Heart left ventricle (tissue), 16 donors: ENCODE measurements at regions of chr5 and their contacts with region 1.

Region 1: GRCh38 chr5:54217826-54218503 is 92.4 kb downstream of the ARL15 start:
- DNase-seq: peak in 2 of 5 donors; percentile 32 to 40
- ATAC-seq: peak; percentile 71 to 89 (median 81)
- H3K4me3 ChIP-seq: no peak overlapping the region
- H3K27ac ChIP-seq: no peak overlapping the region
- H3K4me1 ChIP-seq: peaks cover 0 to 20% (median 5%) of the 10 kb centered on the region in 12 donors
- H3K27me3 ChIP-seq: no peaks in the 10 kb centered on the region
- CTCF ChIP-seq: peak; percentile 75 to 91 (median 86)
- POLR2A ChIP-seq: no peak

Region 2: DNA sequence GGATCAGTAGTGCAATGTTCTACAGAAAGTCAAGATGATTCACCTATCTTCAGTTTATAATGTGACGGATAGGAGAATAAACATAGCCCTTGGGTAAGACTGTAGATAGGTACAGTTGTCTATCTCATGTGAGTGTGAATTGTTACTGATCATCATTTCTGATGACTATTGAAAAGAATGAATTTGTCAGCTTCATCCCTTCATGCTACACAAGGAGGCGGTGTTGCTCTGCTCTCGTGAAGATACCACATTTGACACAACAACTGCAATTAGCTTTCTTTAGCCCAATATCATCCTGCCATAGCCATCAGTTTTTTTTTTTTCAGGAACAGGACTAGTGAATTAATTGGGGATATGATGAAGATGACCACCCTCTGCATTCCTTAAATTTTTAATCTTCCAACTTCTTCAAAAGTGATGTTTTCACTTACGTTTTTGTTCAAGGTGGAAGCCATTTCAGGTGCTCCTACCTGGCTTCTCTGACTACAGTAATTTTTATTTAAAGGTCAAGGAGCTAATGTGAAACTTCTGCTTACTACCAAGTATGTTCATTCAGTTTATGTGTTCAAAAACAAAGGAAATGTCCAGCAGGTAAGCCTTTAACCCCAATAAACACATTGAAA is 955.5 kb before region 1 on chr5:
- intact Hi-C with region 1: loop called in 2 of 10 experiments (anchors 10 kb)
- DNase-seq: no peak
- ATAC-seq: no peak
- H3K4me3 ChIP-seq: no peak overlapping the region
- H3K27ac ChIP-seq: no peak overlapping the region
- H3K4me1 ChIP-seq: peaks cover 0 to under 1% (median 0%) of the 10 kb centered on the region in 12 donors
- H3K27me3 ChIP-seq: no peaks in the 10 kb centered on the region
- CTCF ChIP-seq: peak in 7 of 12 donors; percentile 18 to 54 (median 47)
- POLR2A ChIP-seq: no peak

Region 3: GRCh38 chr5:53874409-53874808 is 343.6 kb before region 1 on chr5:
- intact Hi-C with region 1: loop called in 3 of 10 experiments (anchors 10 kb)
- DNase-seq: no peak
- ATAC-seq: no peak
- H3K4me3 ChIP-seq: no peak overlapping the region
- H3K27ac ChIP-seq: no peak overlapping the region
- H3K4me1 ChIP-seq: no peaks in the 10 kb centered on the region
- H3K27me3 ChIP-seq: no peaks in the 10 kb centered on the region
- CTCF ChIP-seq: peak in 1 of 12 donors; percentile 5
- POLR2A ChIP-seq: no peak

Region 4: DNA sequence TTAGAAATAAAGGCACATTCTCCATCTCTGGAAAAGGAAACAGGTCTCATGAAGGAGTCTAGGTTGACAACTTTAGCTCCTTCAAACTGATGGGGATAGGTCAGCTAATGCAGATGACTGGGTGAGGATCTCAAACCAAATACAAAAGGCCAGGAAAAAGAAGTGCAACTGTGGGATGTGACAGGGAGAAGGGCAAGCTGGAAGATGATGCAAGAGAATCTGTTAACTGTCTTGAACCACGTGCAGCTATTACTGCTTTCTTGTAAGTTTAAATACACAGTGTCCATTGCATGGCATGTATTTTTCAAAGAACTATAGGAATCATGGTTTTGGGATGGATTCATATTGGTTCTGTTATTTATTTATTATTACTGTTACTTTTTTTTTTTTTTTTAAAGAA is 325.7 kb before region 1 on chr5:
- intact Hi-C with region 1: loop called in 1 of 10 experiments (anchors 10 kb)
- DNase-seq: no peak
- ATAC-seq: no peak
- H3K4me3 ChIP-seq: no peak overlapping the region
- H3K27ac ChIP-seq: peak overlapping the region in 2 of 12 donors; percentile 26 to 61
- H3K4me1 ChIP-seq: peaks cover 0 to 10% (median 0%) of the 10 kb centered on the region in 12 donors
- H3K27me3 ChIP-seq: no peaks in the 10 kb centered on the region
- CTCF ChIP-seq: no peak
- POLR2A ChIP-seq: no peak

Region 5: DNA sequence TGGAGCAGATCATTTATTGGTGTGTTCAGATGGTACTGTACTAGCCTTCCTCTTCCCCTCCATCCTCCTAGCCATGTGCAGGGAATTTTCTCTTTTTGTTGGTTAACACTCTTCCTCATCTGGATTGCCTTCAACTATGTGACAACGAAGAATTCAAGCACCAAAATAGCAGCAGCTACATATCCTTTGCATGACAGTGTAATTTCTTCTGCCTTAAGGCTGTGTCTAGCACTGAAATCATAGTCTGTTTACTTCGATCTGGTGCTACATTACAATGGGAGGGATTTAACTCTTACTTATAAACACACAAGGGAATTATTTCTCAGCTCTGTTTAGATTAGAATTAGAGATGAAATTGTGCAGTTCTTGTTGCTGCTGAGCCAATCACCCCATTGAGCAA is 168.0 kb before region 1 on chr5:
- intact Hi-C with region 1: loop called in 1 of 10 experiments (anchors 10 kb)
- DNase-seq: no peak
- ATAC-seq: peak; percentile 60 to 82 (median 73)
- H3K4me3 ChIP-seq: peak overlapping the region in 1 of 12 donors; percentile 8
- H3K27ac ChIP-seq: peak overlapping the region in 9 of 12 donors; percentile 16 to 73 (median 56)
- H3K4me1 ChIP-seq: peaks cover 0 to 26% (median 1%) of the 10 kb centered on the region in 12 donors
- H3K27me3 ChIP-seq: no peaks in the 10 kb centered on the region
- CTCF ChIP-seq: no peak
- POLR2A ChIP-seq: no peak

Region 6: GRCh38 chr5:54090495-54091084 is 127.4 kb before region 1 on chr5:
- intact Hi-C with region 1: loop called in 1 of 10 experiments (anchors 10 kb)
- DNase-seq: no peak
- ATAC-seq: peak in 2 of 4 donors; percentile 55 to 67
- H3K4me3 ChIP-seq: no peak overlapping the region
- H3K27ac ChIP-seq: peak overlapping the region in 1 of 12 donors; percentile 7
- H3K4me1 ChIP-seq: peaks cover 0 to 16% (median 0%) of the 10 kb centered on the region in 12 donors
- H3K27me3 ChIP-seq: no peaks in the 10 kb centered on the region
- CTCF ChIP-seq: peak in 6 of 12 donors; percentile 12 to 30 (median 26)
- POLR2A ChIP-seq: no peak